CD4-positive, alpha-beta T cell (primary cell): ENCODE measurements at regions of chr6 and their contacts with region 1.

Region 1: GRCh38 chr6:99330159-99330558 is 19.3 kb downstream of the FAXC start:
- DNase-seq: peak; percentile 6 to 74 (median 30)
- ATAC-seq: peak; percentile 54
- H3K4me3 ChIP-seq: no peak overlapping the region
- H3K4me3 Mint-ChIP-seq: no peak overlapping the region
- H3K27ac ChIP-seq: no peak overlapping the region
- H3K27ac Mint-ChIP-seq: no peak overlapping the region
- H3K4me1 ChIP-seq: no peaks in the 10 kb centered on the region
- H3K4me1 Mint-ChIP-seq: no peaks in the 10 kb centered on the region
- H3K27me3 ChIP-seq: peaks cover 0 to 5% of the 10 kb centered on the region in 2 experiments
- H3K27me3 Mint-ChIP-seq: peaks cover 14% of the 10 kb centered on the region
- CTCF ChIP-seq: peak; percentile 72

Region 2: GRCh38 chr6:99746261-99746895 is 416.2 kb after region 1 on chr6:
- CTCF ChIA-PET with region 1: no interaction called
- POLR2A ChIA-PET with region 1: no interaction called
- intact Hi-C with region 1: loop called (anchors 5 to 10 kb)
- DNase-seq: peak in 13 of 14 experiments; percentile 10 to 79 (median 37)
- ATAC-seq: peak; percentile 76
- H3K4me3 ChIP-seq: no peak overlapping the region
- H3K4me3 Mint-ChIP-seq: no peak overlapping the region
- H3K27ac ChIP-seq: no peak overlapping the region
- H3K27ac Mint-ChIP-seq: no peak overlapping the region
- H3K4me1 ChIP-seq: no peaks in the 10 kb centered on the region
- H3K4me1 Mint-ChIP-seq: no peaks in the 10 kb centered on the region
- H3K27me3 ChIP-seq: peaks cover 4 to 12% of the 10 kb centered on the region in 2 experiments
- H3K27me3 Mint-ChIP-seq: peaks cover 59% of the 10 kb centered on the region
- CTCF ChIP-seq: peak; percentile 87